ENCODE measurements at regions of chrX and their contacts with region 1.

Region 1: DNA sequence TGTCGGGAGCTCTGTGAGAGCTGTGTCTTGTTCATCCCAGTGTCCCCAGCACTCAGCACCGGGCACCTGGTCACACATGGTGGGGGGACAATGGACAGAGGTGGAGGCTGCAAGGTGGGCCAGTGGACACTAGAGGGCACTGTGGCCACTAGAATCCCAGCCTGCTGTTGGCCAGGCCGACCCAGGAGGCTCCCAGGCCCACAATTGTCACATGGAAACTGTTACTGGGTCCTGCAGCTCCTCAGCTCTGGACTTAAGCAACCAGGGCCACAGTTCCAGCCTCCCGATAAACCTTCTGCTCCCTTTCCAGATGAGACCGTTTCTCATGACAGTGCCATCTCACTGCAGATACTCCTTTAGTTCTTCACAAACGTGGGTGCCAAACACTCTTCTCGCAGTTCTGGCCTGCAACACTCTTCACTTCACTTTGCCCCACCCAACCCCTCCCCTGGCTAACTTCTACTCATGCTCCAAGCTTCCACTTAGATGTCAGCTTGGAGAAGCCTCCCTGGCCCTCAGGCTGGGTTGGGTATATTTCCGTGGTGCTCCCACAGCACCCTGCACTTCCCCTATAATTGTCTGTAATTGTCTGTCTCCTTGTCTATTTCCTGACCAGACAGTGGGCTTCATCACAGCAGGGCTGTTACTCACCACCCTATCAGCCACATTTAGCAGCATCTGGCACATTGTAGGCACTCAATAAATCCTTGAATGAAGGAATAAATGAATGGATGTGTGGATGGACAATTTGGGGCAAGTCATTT is 3.5 kb upstream of the IQSEC2 start:
- DNase-seq: peak; percentile 64 to 85
- ATAC-seq: peak; percentile 49 to 63 (median 53)
- H3K4me3 ChIP-seq: no peak overlapping the region
- H3K27ac ChIP-seq: no peak overlapping the region
- H3K4me1 ChIP-seq: peaks cover 19% of the 10 kb centered on the region
- H3K27me3 ChIP-seq: peaks cover 0 to 6% (median 0%) of the 10 kb centered on the region in 3 donors
- CTCF ChIP-seq: peak; percentile 84

Region 2: GRCh38 chrX:53081925-53082772 is 202.7 kb before region 1 on chrX and contains the start of gene TSPYL2:
- intact Hi-C with region 1: loop called in 1 of 2 experiments (anchors 5 kb)
- DNase-seq: peak; percentile 94 to 97
- ATAC-seq: peak; percentile 94 to 98 (median 96)
- H3K4me3 ChIP-seq: peak within 1 kb of the TSS; percentile 73
- H3K27ac ChIP-seq: peak within 1 kb of the TSS; percentile 81
- H3K4me1 ChIP-seq: no peaks in the 10 kb centered on the region
- H3K27me3 ChIP-seq: peaks cover 0 to 31% (median 0%) of the 10 kb centered on the region in 3 donors
- CTCF ChIP-seq: no peak
- total RNA-seq, gene TSPYL2: 20.0 to 56.4 (median 28.1) TPM

Region 3: GRCh38 chrX:53330331-53330730 is 45.5 kb after region 1 on chrX:
- intact Hi-C with region 1: loop called in 1 of 2 experiments (anchors 5 kb)
- DNase-seq: no peak
- ATAC-seq: no peak
- H3K4me3 ChIP-seq: no peak overlapping the region
- H3K27ac ChIP-seq: no peak overlapping the region
- H3K4me1 ChIP-seq: no peaks in the 10 kb centered on the region
- H3K27me3 ChIP-seq: peaks cover 0 to 92% (median 0%) of the 10 kb centered on the region in 3 donors
- CTCF ChIP-seq: no peak

Region 4: DNA sequence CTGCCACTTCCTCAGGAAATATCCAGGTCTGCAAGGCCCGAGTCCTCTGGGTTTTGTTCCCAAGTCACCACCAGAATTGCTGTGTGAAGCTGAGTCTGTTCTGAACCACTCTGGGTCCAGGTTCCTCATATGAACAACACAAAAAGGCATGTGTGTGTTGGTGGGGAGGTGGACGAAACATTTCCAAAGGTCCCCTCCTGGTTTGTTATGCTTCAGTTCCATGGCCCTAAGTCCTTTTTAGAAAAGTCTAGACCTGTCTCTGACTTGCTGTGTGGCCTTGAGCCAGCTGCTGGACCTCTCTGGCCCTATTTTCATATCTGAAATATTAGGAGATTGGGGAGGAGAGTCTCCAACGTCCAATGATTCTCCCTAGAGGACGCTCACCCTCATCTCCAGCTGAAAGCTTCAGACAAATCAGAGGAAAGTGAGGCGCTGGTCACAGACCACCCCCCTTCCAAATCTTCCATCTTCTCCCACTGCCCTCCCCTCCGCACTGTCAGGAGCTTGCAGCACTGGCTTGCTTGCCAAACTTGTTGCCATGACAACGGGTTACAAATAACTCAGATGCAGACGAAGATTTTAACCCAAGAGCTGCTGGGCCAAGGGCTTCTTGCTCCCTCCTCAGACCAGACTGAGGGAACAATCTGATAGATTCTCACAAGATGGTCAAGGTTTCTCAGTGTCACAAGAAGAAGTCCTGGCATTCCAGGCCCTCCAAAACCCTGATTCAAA is 73.1 kb after region 1 on chrX:
- intact Hi-C with region 1: no loop called
- DNase-seq: no peak
- ATAC-seq: no peak
- H3K4me3 ChIP-seq: no peak overlapping the region
- H3K27ac ChIP-seq: no peak overlapping the region
- H3K4me1 ChIP-seq: no peaks in the 10 kb centered on the region
- H3K27me3 ChIP-seq: no peaks in the 10 kb centered on the region
- CTCF ChIP-seq: no peak

Region 5: DNA sequence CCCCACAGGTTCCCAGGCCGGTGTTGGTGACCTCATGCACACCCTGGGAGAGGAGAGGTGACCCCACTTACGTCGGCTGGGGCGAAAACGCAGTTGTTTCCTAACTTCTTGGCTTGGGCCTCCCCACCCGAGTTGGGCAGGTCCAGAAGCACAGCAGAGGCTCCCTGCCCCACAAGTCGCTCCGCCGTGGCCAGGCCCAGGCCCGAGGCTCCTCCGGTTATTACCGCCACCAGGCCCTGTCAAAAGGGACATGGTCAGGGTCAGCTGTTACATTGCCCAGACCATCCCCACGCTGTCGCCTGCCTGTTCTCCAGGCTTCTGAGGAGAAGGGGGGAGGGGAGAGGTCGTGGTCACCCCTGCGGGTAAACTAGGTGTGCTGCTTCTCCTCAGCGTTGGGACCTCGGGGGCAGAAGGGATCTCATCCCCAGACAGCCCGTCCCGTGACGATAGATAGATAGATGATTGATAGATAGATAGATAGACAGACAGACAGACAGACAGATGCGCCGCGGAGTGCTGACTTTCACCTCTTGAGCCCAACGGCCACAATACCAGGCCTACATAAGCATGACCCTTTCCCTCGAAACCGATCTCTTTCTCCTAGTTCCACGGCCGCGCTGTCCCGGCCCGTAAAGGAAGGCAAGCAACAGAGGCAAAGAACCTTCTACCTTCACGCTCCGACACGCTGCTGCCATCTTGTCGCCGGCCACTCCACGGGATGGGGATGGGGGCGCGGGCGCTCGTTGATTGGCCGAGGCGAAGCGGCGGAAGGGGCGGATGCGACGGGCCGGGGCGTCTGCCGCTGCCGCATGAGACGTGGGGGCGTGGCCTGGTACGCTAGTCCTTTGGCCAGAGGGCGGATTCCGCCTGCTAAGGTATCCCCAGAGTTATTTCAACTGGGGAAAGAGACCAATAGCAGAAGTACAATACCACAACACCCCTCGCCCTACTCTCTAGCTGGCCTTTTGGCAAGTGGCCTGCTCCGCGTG is 149.1 kb after region 1 on chrX and contains the start of gene HSD17B10:
- intact Hi-C with region 1: loop called in 1 of 2 experiments (anchors 10 kb)
- DNase-seq: peak; percentile 91 to 94
- ATAC-seq: peak; percentile 97 to 99 (median 98)
- H3K4me3 ChIP-seq: peak within 1 kb of the TSS; percentile 79
- H3K27ac ChIP-seq: peak within 1 kb of the TSS; percentile 74
- H3K4me1 ChIP-seq: peaks cover 4% of the 10 kb centered on the region
- H3K27me3 ChIP-seq: peaks cover 0 to 23% (median 0%) of the 10 kb centered on the region in 3 donors
- CTCF ChIP-seq: no peak
- total RNA-seq, gene HSD17B10: 51.8 to 98.0 (median 68.4) TPM

Measured in psoas muscle (tissue), 8 donors.